ENCODE measurements at regions of chr1 and their contacts with region 1.

Region 1: GRCh38 chr1:159798893-159799292 is 3.3 kb upstream of the FCRL6 start:
- DNase-seq: peak in 4 of 6 donors; percentile 46 to 68 (median 56)
- ATAC-seq: peak; percentile 82 to 99 (median 96)
- H3K4me3 ChIP-seq: no peak overlapping the region
- H3K27ac ChIP-seq: no peak overlapping the region
- H3K4me1 ChIP-seq: no peaks in the 10 kb centered on the region
- H3K27me3 ChIP-seq: no peaks in the 10 kb centered on the region
- CTCF ChIP-seq: peak; percentile 42 to 67 (median 56)

Region 2: GRCh38 chr1:159161001-159161718 is 637.7 kb before region 1 on chr1:
- intact Hi-C with region 1: loop called in 1 of 3 experiments (anchors 10 kb)
- DNase-seq: peak; percentile 64 to 83 (median 74)
- ATAC-seq: peak; percentile 92 to 100 (median 100)
- H3K4me3 ChIP-seq: no peak overlapping the region
- H3K27ac ChIP-seq: no peak overlapping the region
- H3K4me1 ChIP-seq: peaks cover 0 to 3% (median 0%) of the 10 kb centered on the region in 3 donors
- H3K27me3 ChIP-seq: peaks cover 0 to 7% (median 3%) of the 10 kb centered on the region in 4 donors
- CTCF ChIP-seq: peak; percentile 85 to 95 (median 90)

Region 3: GRCh38 chr1:159889821-159890252 is 90.9 kb after region 1 on chr1:
- intact Hi-C with region 1: loop called in 2 of 3 experiments (anchors 2 to 5 kb)
- DNase-seq: no peak
- ATAC-seq: peak in 3 of 4 donors; percentile 39 to 73 (median 70)
- H3K4me3 ChIP-seq: no peak overlapping the region
- H3K27ac ChIP-seq: peak overlapping the region in 1 of 4 donors; percentile 20
- H3K4me1 ChIP-seq: no peaks in the 10 kb centered on the region
- H3K27me3 ChIP-seq: no peaks in the 10 kb centered on the region
- CTCF ChIP-seq: no peak

Region 4: DNA sequence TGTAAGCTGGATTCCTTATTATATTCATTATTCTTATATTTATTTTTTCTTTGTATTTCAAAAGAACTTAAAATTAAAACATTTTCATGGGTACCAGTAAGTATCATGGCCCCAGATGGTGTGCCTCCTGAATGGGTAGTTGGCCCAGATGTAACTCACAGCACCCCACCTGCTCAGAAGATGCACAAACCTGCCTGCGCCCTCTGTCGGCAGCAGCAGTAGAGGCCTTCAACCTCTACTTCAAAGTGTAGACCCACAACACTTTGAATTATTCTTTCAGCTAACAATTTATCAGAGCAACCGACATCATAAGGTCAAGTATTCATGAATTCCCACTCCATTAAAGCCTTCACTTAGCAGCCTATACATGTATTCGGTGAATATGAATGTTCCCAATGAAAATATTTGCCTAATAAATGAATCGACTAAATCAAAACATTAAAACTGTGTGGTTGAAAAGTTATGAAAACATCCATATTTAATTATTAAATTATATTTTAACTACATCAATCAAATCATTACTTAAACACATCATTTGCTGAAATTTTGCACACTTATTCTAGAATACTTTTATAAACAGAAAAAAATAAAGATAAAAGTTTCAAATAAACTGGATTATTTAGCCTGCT is 207.5 kb after region 1 on chr1:
- intact Hi-C with region 1: loop called in 2 of 3 experiments (anchors 5 to 10 kb)
- DNase-seq: peak; percentile 60 to 86 (median 75)
- ATAC-seq: peak; percentile 78 to 95 (median 92)
- H3K4me3 ChIP-seq: no peak overlapping the region
- H3K27ac ChIP-seq: no peak overlapping the region
- H3K4me1 ChIP-seq: no peaks in the 10 kb centered on the region
- H3K27me3 ChIP-seq: no peaks in the 10 kb centered on the region
- CTCF ChIP-seq: peak; percentile 50 to 79 (median 72)

Region 5: GRCh38 chr1:160018900-160019299 is 220.0 kb after region 1 on chr1:
- intact Hi-C with region 1: loop called in 1 of 3 experiments (anchors 10 kb)
- DNase-seq: no peak
- ATAC-seq: no peak
- H3K4me3 ChIP-seq: no peak overlapping the region
- H3K27ac ChIP-seq: no peak overlapping the region
- H3K4me1 ChIP-seq: no peaks in the 10 kb centered on the region
- H3K27me3 ChIP-seq: no peaks in the 10 kb centered on the region
- CTCF ChIP-seq: no peak

Measured in pancreas (tissue), 10 donors.